Calu3 (cell line): ENCODE measurements at regions of chr4 and their contacts with region 1.

Region 1: DNA sequence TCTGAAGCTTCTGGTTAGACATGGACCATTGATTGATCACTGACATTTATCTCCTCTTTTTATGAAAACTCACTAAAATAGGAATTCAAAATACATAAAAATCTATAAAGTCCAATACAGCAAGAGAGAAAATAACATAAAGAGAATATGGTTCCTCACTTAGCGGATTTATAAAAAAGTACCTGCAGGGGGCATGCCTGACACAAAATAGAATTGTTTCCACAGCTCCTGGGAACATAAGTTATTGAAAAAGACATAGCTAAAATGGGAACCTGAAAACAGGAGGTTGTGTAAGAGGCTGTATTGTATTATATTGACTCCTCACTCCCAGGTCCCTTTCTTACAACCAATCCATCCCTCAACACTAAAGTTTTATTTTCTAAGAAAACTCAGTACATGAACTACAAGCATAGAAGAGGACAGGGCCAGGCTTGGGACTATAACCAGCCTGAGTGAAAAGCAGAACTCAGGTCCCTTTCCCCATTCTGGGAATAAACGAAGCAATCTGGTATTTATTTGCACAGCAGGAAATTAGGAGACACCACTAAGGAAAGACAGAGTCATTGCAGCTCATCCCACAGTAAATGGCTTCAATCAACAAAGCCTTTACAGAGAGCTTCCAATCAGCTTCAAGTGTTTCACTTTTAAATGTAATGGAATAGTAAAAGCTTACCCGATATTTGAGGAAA is 121.1 kb upstream of the NDST4 start:
- DNase-seq: peak; percentile 20
- H3K4me3 Mint-ChIP-seq: no peak overlapping the region
- H3K27ac Mint-ChIP-seq: no peak overlapping the region
- H3K4me1 Mint-ChIP-seq: no peaks in the 10 kb centered on the region
- H3K27me3 Mint-ChIP-seq: no peaks in the 10 kb centered on the region
- CTCF ChIP-seq: peak; percentile 22

Region 2: DNA sequence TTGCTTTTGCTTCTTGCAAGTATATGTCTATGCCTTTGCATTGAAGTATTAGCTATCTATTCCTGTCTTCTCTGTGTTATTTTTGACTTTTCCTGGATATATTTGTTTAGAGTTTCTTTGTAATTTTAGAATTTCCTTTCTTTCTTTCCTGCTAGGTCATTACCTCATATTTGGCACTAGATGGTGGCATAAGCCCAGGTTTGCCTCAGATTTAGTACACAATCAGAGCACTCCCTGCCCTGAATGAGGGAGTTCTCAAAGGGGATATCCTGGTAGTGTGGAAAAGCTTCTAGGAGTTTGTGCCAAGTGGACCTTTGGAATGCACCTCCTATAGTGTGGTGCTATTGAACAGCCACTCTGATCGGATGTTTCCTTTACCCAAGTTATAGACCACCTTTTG is 454.3 kb before region 1 on chr4:
- CTCF ChIA-PET with region 1: no interaction called
- intact Hi-C with region 1: loop called (anchors 10 kb)
- DNase-seq: peak; percentile 24
- H3K4me3 Mint-ChIP-seq: no peak overlapping the region
- H3K27ac Mint-ChIP-seq: no peak overlapping the region
- H3K4me1 Mint-ChIP-seq: no peaks in the 10 kb centered on the region
- H3K27me3 Mint-ChIP-seq: no peaks in the 10 kb centered on the region
- CTCF ChIP-seq: peak; percentile 33

Region 3: DNA sequence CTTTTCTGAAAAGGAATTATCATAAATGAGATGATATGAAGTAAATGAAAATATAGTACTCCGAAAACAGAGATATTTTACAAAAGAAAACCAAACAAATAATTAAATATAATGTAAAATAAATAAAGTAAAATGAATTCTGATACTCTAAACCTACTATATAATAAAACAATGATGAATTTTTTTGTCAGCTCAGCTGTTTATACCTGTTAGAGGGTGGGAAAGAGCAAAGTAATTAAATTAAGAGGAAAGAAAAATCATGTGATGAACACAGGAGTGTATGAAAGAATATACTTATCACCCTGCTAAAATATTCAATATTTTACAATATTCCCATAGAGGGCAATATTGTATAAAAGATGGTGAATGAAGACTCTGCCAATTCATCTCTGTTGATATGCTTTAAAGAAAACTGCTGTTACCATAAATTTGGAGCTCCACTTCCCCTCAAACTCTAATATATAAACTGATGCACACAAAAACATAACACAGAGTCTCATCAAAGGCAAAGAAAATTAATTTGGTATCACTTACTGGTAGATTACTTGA is 114.7 kb before region 1 on chr4:
- CTCF ChIA-PET with region 1: no interaction called
- intact Hi-C with region 1: loop called (anchors 10 kb)
- DNase-seq: no peak
- H3K4me3 Mint-ChIP-seq: no peak overlapping the region
- H3K27ac Mint-ChIP-seq: no peak overlapping the region
- H3K4me1 Mint-ChIP-seq: no peaks in the 10 kb centered on the region
- H3K27me3 Mint-ChIP-seq: no peaks in the 10 kb centered on the region
- CTCF ChIP-seq: no peak

Region 4: DNA sequence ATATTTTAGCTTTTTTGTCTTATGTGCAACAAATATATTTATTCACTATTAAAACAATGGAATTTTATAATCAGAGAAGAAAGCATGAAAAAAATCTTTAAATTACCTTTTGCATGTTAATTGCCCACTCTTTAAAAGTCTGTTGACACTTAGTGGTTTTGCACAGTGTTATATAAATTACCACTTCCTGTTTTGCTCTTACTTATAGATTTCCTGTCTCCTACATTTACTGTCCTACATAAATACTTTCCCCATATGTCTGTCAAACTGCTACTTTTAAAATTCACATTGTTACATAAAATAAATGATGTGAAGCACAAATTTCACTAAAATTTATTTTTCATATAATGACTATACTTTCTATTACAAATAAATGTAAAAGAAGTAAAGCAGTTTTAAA is 40.0 kb after region 1 on chr4:
- CTCF ChIA-PET with region 1: no interaction called
- intact Hi-C with region 1: no loop called
- DNase-seq: no peak
- H3K4me3 Mint-ChIP-seq: no peak overlapping the region
- H3K27ac Mint-ChIP-seq: no peak overlapping the region
- H3K4me1 Mint-ChIP-seq: no peaks in the 10 kb centered on the region
- H3K27me3 Mint-ChIP-seq: no peaks in the 10 kb centered on the region
- CTCF ChIP-seq: no peak

Region 5: GRCh38 chr4:115537387-115537786 is 302.8 kb after region 1 on chr4:
- CTCF ChIA-PET with region 1: interaction called, 9 read pairs
- intact Hi-C with region 1: loop called (anchors 1 kb)
- DNase-seq: no peak
- H3K4me3 Mint-ChIP-seq: no peak overlapping the region
- H3K27ac Mint-ChIP-seq: no peak overlapping the region
- H3K4me1 Mint-ChIP-seq: no peaks in the 10 kb centered on the region
- H3K27me3 Mint-ChIP-seq: no peaks in the 10 kb centered on the region
- CTCF ChIP-seq: no peak

Region 6: DNA sequence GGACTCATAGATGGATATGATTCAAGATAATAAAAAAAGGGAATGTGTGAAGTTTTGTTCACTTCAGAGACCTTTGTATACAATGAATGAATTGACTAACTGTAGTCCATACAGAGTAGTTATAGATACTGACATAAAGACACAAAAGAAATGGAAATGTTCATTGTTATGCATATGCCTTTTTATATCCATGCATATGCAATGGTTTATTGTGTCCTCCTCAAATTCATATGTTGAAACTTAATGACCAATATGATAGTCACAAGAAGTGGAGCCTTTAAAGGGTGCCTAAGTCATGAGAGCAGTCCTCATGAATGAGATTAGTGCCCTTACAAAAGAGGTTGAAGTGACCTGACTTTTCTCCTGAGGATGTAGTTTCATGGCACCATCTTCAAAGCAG is 346.4 kb after region 1 on chr4:
- CTCF ChIA-PET with region 1: no interaction called
- intact Hi-C with region 1: no loop called
- DNase-seq: no peak
- H3K4me3 Mint-ChIP-seq: no peak overlapping the region
- H3K27ac Mint-ChIP-seq: no peak overlapping the region
- H3K4me1 Mint-ChIP-seq: no peaks in the 10 kb centered on the region
- H3K27me3 Mint-ChIP-seq: no peaks in the 10 kb centered on the region
- CTCF ChIP-seq: no peak

Region 7: GRCh38 chr4:115851918-115852766 is 617.6 kb after region 1 on chr4:
- CTCF ChIA-PET with region 1: interaction called, 4 read pairs
- intact Hi-C with region 1: loop called (anchors 5 kb)
- DNase-seq: peak; percentile 54
- H3K4me3 Mint-ChIP-seq: no peak overlapping the region
- H3K27ac Mint-ChIP-seq: no peak overlapping the region
- H3K4me1 Mint-ChIP-seq: no peaks in the 10 kb centered on the region
- H3K27me3 Mint-ChIP-seq: no peaks in the 10 kb centered on the region
- CTCF ChIP-seq: peak; percentile 19